Left colon (tissue), 2 donors: ENCODE measurements at regions of chr19 and their contacts with region 1.

Region 1: GRCh38 chr19:55301459-55302317 is 17.9 kb downstream of the BRSK1 start:
- DNase-seq: peak; percentile 82 to 94
- ATAC-seq: peak; percentile 82

Region 2: GRCh38 chr19:55369671-55370304 is 68.1 kb after region 1 on chr19:
- intact Hi-C with region 1: loop called in 1 of 2 experiments (anchors 10 kb)
- DNase-seq: no peak
- ATAC-seq: no peak

Region 3: DNA sequence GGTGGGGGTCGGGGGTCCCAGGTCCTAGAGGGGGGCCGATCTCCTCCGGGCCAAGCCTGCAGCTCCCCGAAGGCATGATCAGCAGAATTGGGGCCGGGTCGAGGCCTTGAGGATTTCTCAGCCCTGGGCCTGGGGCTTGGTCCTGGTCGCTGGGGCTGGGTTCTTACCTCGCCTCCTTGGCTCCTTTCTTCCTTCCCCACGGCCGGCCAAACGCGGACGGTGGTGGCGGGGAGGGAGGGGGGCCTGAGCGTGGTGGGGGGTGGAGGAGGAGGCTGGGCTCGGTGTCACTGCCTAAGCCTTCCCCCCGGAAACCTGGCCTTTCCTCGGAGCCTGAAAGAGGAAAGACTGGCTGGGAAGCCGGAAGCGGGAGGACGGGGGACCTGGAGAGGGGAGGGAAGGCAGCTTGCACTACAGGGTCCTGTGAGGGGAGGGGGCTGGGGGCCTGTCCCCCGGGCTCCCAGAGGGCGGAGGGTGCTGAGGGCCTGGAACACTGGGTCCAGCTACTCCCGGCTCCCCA is 279.0 kb after region 1 on chr19 and contains the start of gene ZNF579:
- intact Hi-C with region 1: no loop called
- DNase-seq: peak; percentile 85 to 87
- ATAC-seq: peak; percentile 86
- total RNA-seq, gene ZNF579: 5.3 to 7.3 TPM